CD4-positive, alpha-beta memory T cell (primary cell): ENCODE measurements at regions of chr16 and their contacts with region 1.

Region 1: DNA sequence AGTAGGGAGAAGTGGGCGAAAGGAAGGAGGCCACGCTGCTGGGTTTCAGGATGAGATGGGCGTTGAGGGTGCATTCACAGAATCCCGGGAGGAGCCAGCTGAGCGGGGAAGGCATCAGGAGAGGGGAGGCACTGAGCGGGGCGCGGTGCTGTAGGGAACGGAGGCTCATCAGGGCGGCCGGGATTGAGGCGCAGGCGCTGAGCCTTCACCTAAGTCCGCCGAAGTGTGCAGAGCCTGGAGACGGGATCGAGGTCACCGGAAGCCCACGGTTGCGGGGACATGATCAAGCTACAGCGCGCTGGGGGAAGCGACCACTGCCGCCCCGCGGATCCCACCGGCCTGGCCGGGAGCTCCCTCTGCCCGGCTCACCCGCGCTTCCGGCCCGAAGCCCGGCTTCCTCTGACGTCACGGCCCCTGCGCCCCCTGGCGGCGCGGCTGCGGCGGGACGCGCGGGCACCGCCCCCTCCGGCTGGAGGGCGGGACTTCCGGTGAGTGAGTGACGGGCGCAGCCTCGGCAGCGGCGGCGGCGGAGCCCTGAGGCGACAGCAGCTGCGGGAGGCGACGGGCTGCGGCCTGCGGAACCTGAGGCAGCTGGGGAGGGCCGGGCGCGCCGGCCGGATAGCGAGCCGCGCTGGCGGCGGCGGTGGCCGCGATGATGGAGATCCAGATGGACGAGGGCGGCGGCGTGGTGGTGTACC is at the start of gene MAPK8IP3:
- DNase-seq: peak; percentile 87 to 99 (median 95)
- H3K4me3 ChIP-seq: peak within 1 kb of the TSS; percentile 81 to 99
- H3K4me3 Mint-ChIP-seq: peak within 1 kb of the TSS; percentile 90 to 100 (median 99)
- H3K27ac ChIP-seq: peak within 1 kb of the TSS; percentile 88
- H3K27ac Mint-ChIP-seq: peak within 1 kb of the TSS; percentile 95 to 100 (median 99)
- H3K4me1 ChIP-seq: peaks cover 40% of the 10 kb centered on the region
- H3K4me1 Mint-ChIP-seq: peaks cover 17 to 46% (median 29%) of the 10 kb centered on the region in 4 donors
- H3K27me3 ChIP-seq: no peaks in the 10 kb centered on the region
- H3K27me3 Mint-ChIP-seq: no peaks in the 10 kb centered on the region
- total RNA-seq, gene MAPK8IP3: 238 to 248 TPM

Region 2: DNA sequence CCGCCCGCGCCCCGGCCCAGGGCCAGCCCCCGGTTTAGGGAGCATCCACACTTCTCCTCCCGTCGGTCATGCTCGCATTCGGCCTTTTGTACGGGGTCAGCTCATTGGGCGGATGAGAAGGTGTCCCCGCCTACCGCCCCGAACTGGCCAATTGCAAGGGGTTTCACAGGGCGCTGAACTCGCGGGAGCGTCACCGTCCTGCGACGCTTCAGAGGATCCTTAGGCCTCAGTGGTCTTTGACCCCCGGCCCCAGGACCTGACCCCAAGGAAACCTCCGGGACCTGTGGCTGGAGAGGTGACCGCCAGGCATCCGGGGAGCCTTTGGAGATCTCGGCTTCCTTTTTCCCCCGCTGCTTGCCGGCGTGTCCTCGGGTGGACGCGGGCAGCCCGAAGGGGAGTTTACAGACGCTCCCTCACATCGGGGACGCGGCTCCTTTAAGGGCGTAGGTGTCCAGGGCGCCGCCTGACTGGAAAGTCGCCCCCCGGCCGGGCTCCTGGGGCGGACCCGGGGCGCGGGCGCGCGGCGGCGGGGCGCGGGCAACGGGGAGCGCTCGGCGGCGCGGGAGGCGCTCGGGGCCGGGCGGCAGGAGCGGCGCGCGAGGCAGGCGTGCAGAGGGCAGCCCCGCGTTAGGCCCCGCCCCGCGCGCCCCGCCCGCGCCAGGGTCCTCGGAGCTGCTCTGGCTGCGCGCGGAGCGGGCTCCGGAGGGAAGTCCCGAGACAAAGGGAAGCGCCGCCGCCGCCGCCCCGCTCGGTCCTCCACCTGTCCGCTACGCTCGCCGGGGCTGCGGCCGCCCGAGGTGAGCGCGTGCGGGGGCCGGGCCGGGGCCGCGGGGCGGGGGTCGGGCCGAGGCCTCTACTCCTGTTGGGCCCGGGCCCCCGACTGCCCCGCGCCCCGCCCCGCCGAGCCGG is 396.6 kb before region 1 on chr16 and contains the start of gene UBE2I:
- CTCF ChIA-PET with region 1: interaction called, 3 read pairs
- POLR2A ChIA-PET with region 1: interaction called, 12 read pairs
- intact Hi-C with region 1: no loop called
- DNase-seq: peak; percentile 96 to 100 (median 98)
- H3K4me3 ChIP-seq: peak within 1 kb of the TSS; percentile 85 to 97
- H3K4me3 Mint-ChIP-seq: peak within 1 kb of the TSS; percentile 89 to 100 (median 98)
- H3K27ac ChIP-seq: peak within 1 kb of the TSS; percentile 100
- H3K27ac Mint-ChIP-seq: peak within 1 kb of the TSS; percentile 99 to 100 (median 99)
- H3K4me1 ChIP-seq: peaks cover 39% of the 10 kb centered on the region
- H3K4me1 Mint-ChIP-seq: peaks cover 16 to 47% (median 35%) of the 10 kb centered on the region in 4 donors
- H3K27me3 ChIP-seq: no peaks in the 10 kb centered on the region
- H3K27me3 Mint-ChIP-seq: no peaks in the 10 kb centered on the region
- total RNA-seq, gene UBE2I: 170 to 177 TPM

Region 3: DNA sequence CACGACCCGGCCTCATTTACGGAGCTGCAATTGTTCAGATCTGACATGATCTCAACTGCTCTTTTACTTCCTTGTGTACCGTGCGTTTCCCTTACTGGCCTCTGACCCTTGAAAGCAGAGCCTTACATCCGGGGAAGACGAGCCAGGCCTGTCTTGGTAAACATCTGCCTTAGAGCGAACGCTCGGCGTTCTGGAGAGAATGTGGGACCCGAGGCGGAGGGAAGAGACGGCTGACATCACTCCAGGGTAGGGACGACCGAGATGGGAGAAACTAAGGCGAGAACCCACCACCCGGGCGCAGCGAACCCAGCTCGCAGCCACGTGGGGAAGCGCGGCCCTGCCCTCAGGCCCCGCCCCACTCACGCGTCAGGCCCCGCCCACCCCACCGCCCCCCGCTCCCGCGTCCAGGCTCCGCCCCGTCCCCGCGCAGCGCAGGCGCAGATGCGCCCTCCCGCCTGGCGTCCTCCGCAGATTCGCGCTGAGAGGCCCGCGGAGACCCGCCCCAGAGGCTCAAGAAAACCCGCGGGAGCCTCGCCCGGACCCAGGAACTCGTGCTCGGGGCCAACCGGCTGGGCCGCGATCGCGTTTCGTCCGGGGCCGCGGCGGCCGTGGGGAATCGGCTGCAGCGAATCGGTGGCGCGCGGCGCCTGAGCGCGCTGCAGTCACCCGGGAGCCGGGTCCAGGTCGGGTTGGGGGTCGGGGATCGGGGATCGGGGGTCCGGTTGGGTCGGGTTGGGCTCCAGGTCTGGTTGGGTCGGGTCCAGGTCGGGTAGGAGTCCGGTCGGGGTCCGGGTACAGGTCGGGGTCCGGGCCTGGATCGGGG is 212.7 kb before region 1 on chr16 and contains the start of gene TELO2:
- CTCF ChIA-PET with region 1: no interaction called
- POLR2A ChIA-PET with region 1: interaction called, 10 read pairs
- intact Hi-C with region 1: loop called (anchors 10 kb)
- DNase-seq: peak; percentile 85 to 93 (median 88)
- H3K4me3 ChIP-seq: peak within 1 kb of the TSS; percentile 48 to 72
- H3K4me3 Mint-ChIP-seq: peak within 1 kb of the TSS; percentile 93 to 98 (median 95)
- H3K27ac ChIP-seq: peak within 1 kb of the TSS; percentile 78
- H3K27ac Mint-ChIP-seq: peak within 1 kb of the TSS; percentile 93 to 100 (median 99)
- H3K4me1 ChIP-seq: peaks cover 20% of the 10 kb centered on the region
- H3K4me1 Mint-ChIP-seq: peaks cover 7 to 22% (median 15%) of the 10 kb centered on the region in 4 donors
- H3K27me3 ChIP-seq: no peaks in the 10 kb centered on the region
- H3K27me3 Mint-ChIP-seq: peaks cover 0 to 1% of the 10 kb centered on the region in 2 donors
- total RNA-seq, gene TELO2: 55.3 to 56.0 TPM

Region 4: DNA sequence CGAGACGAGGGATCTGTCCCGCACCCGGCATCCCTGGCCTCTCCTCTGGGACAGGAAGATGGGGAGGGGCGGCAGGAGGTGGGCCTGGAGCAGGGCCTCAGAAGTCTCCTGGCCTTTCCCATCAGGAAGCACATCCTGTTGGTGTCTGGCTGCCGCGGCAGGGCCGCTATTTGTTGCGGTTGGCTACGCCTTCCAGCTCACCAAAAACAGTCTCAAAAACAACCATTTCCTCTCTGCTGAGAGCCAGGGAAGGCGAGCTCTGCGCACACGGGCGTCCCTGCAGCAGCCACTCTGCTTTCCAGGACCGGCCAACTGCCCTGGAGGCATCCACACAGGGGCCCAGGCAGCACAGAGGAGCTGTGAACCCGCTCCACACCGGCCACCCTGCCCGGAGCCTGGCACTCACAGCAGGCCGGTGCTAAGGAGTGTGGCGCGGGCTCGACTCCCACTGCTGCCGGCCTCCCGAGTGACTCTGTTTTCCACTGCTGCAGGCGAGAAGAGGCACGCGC is 172.3 kb before region 1 on chr16 and contains the start of gene TMEM204:
- CTCF ChIA-PET with region 1: no interaction called
- POLR2A ChIA-PET with region 1: interaction called, 10 read pairs
- intact Hi-C with region 1: loop called (anchors 5 kb)
- DNase-seq: peak; percentile 42 to 62 (median 58)
- H3K4me3 ChIP-seq: peak within 1 kb of the TSS; percentile 82 to 96
- H3K4me3 Mint-ChIP-seq: peak within 1 kb of the TSS; percentile 94 to 100 (median 98)
- H3K27ac ChIP-seq: peak within 1 kb of the TSS; percentile 73
- H3K27ac Mint-ChIP-seq: peak within 1 kb of the TSS; percentile 65 to 96 (median 93)
- H3K4me1 ChIP-seq: peaks cover 42% of the 10 kb centered on the region
- H3K4me1 Mint-ChIP-seq: peaks cover 24 to 53% (median 38%) of the 10 kb centered on the region in 4 donors
- H3K27me3 ChIP-seq: no peaks in the 10 kb centered on the region
- H3K27me3 Mint-ChIP-seq: no peaks in the 10 kb centered on the region
- total RNA-seq, gene TMEM204: 124 to 125 TPM

Region 5: DNA sequence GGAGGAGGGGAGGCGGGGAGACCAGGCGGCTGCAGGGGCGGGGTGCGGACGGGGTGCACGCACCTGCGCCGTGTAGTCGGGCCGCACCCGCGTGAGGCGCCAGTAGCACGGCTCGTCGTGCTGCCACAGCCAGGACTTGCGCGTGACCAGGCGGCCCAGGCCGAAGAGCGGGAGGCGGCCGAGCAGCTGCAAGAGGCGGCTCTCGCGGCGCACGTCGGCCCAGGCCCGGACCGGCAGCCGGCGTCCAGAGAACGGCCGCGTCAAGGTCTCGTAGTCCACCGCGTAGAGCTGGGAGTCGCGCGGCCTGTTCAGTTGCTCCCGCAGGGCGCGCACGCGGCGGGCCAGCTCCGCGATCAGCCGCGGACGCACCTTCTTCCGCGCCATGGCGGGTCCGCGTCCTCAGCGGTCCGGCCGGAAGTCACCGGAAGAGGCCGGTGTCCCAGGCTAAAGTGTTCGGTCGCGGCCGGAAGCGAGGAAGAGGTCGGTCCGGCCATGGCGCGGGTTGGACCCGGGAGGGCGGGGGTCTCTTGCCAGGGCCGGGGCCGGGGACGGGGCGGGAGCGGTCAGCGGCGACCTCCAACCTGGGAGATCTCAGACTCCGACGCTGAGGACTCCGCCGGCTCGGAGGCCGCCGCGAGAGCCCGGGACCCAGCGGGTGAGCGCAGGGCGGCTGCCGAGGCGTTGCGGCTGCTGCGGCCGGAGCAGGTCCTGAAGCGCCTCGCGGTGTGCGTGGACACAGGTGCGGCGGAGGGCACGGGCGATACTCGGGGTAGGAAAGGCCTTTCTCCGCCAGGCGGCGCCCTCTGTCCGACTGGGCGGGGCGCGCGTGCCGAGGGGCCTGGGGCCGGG is 67.1 kb after region 1 on chr16 and contains the starts of genes EME2 and MRPS34:
- CTCF ChIA-PET with region 1: no interaction called
- POLR2A ChIA-PET with region 1: interaction called, 66 read pairs
- intact Hi-C with region 1: loop called (anchors 2 kb)
- DNase-seq: peak; percentile 72 to 78 (median 74)
- H3K4me3 ChIP-seq: peak within 1 kb of the TSS; percentile 45 to 88
- H3K4me3 Mint-ChIP-seq: peak within 1 kb of the TSS; percentile 85 to 98 (median 96)
- H3K27ac ChIP-seq: peak within 1 kb of the TSS; percentile 72
- H3K27ac Mint-ChIP-seq: peak within 1 kb of the TSS; percentile 90 to 97 (median 95)
- H3K4me1 ChIP-seq: peaks cover 29% of the 10 kb centered on the region
- H3K4me1 Mint-ChIP-seq: peaks cover 11 to 32% (median 15%) of the 10 kb centered on the region in 4 donors
- H3K27me3 ChIP-seq: no peaks in the 10 kb centered on the region
- H3K27me3 Mint-ChIP-seq: no peaks in the 10 kb centered on the region
- total RNA-seq, gene EME2: 32.9 to 33.1 TPM
- total RNA-seq, gene MRPS34: 57.6 to 67.3 TPM

Region 6: DNA sequence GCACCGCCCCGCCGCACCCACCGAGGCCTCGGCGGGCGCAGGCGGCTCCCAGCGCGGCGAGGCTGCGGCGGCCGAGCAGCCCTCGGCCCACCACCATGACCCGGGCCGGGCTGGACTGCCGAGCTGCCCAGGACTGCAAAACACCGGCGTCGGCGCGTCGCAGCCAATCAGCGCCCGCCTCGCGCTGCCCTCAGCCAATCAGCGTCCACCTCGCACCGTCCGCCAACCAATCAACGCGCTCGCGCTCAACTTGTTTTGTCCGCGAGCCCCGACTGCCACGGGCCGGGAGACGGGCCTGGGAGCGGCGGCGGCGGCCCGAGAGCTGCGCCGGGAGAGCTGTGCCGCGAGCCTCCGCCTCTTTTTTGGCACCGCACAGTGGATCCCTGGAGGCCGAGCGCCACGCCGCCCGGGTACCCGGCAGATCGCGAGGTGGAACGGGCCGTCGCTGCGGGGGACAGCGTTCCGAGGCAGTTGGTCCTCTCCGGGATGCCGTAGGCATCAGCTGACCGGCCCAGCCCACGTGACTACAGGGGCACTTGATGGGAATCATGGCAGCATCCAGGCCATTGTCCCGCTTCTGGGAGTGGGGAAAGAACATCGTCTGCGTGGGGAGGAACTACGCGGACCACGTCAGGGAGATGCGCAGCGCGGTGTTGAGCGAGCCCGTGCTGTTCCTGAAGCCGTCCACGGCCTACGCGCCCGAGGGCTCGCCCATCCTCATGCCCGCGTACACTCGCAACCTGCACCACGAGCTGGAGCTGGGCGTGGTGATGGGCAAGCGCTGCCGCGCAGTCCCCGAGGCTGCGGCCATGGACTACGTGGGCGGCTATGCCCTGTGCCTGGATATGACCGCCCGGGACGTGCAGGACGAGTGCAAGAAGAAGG is 121.1 kb after region 1 on chr16 and contains the starts of genes FAHD1 and HAGH:
- CTCF ChIA-PET with region 1: no interaction called
- POLR2A ChIA-PET with region 1: interaction called, 11 read pairs
- intact Hi-C with region 1: loop called (anchors 2 kb)
- DNase-seq: peak; percentile 90 to 98 (median 93)
- H3K4me3 ChIP-seq: peak within 1 kb of the TSS; percentile 78 to 89
- H3K4me3 Mint-ChIP-seq: peak within 1 kb of the TSS; percentile 92 to 96 (median 94)
- H3K27ac ChIP-seq: peak within 1 kb of the TSS; percentile 73
- H3K27ac Mint-ChIP-seq: peak within 1 kb of the TSS; percentile 94 to 97 (median 95)
- H3K4me1 ChIP-seq: peaks cover 43% of the 10 kb centered on the region
- H3K4me1 Mint-ChIP-seq: peaks cover 17 to 58% (median 39%) of the 10 kb centered on the region in 4 donors
- H3K27me3 ChIP-seq: no peaks in the 10 kb centered on the region
- H3K27me3 Mint-ChIP-seq: no peaks in the 10 kb centered on the region
- total RNA-seq, gene FAHD1: 7.8 to 9.6 TPM
- total RNA-seq, gene HAGH: 73.7 to 77.8 TPM